ENCODE measurements at regions of chr17 and their contacts with region 1.

Region 1: GRCh38 chr17:74417178-74418045 is 14.5 kb upstream of the GPRC5C start:
- DNase-seq: peak; percentile 98
- ATAC-seq: peak; percentile 95
- H3K4me3 ChIP-seq: peak overlapping the region; percentile 23 to 52
- H3K27ac ChIP-seq: peak overlapping the region; percentile 62
- H3K4me1 ChIP-seq: peaks cover 36 to 51% of the 10 kb centered on the region in 2 experiments
- H3K27me3 ChIP-seq: no peaks in the 10 kb centered on the region
- CTCF ChIP-seq: no peak
- POLR2A ChIP-seq: no peak
- RAD21 ChIP-seq: peak; percentile 46

Region 2: GRCh38 chr17:74430706-74431567 is 13.5 kb after region 1 on chr17:
- CTCF ChIA-PET with region 1: interaction called, 8 read pairs
- POLR2A ChIA-PET with region 1: interaction called, 10 read pairs
- RAD21 ChIA-PET with region 1: interaction called in 1 of 2 experiments, 6 read pairs
- intact Hi-C with region 1: loop called (anchors 2 kb)
- DNase-seq: peak; percentile 40
- ATAC-seq: peak; percentile 53
- H3K4me3 ChIP-seq: peak overlapping the region; percentile 64 to 70
- H3K27ac ChIP-seq: peak overlapping the region; percentile 89
- H3K4me1 ChIP-seq: peaks cover 40 to 65% of the 10 kb centered on the region in 2 experiments
- H3K27me3 ChIP-seq: no peaks in the 10 kb centered on the region
- CTCF ChIP-seq: no peak
- POLR2A ChIP-seq: no peak
- RAD21 ChIP-seq: no peak

Region 3: DNA sequence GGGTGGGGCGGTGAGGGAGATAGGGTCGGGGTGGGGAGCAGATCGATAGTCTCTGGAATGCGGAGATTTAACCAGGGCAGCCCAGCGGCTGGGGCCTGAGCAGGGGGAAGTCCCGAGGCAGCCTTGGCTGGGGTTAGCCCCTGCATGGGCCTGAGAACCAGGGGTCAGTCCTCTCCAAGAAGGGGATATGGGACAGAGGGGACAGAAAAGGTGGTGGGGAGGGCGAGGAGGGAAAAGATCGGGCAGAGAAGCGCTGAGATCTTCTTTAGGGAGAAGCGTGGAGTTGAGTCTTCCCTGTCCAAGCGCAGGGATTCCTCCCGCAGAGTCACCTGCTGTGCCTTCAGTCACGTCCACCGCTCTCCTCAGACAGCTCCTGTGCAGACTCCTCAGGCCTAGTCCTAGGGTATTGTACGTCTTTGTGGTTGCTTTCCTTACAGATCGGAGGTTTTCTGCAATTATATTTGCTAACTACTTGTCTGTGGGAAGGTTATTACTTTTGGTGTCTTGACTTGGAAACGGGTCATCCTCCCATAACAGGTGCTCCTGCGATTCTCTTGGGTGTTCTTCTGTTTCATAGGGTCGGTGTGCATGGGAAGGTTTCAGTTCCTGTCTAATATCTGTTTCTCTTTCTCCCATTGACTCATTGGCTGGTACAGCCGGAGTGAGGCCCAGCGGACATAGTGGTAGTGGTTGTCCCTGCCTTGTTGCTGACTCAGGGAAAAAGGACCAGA is 50.0 kb after region 1 on chr17:
- CTCF ChIA-PET with region 1: no interaction called
- POLR2A ChIA-PET with region 1: no interaction called
- RAD21 ChIA-PET with region 1: no interaction called
- intact Hi-C with region 1: no loop called
- DNase-seq: no peak
- ATAC-seq: no peak
- H3K4me3 ChIP-seq: no peak overlapping the region
- H3K27ac ChIP-seq: no peak overlapping the region
- H3K4me1 ChIP-seq: peaks cover 0 to 6% of the 10 kb centered on the region in 2 experiments; a peak in 1 of 4 replicates
- H3K27me3 ChIP-seq: no peaks in the 10 kb centered on the region
- CTCF ChIP-seq: no peak
- POLR2A ChIP-seq: no peak
- RAD21 ChIP-seq: no peak